ENCODE measurements at regions of chr9 and their contacts with region 1.

Region 1: GRCh38 chr9:20037699-20038098 is 248.9 kb upstream of the SLC24A2 start:
- DNase-seq: no peak
- ATAC-seq: no peak
- H3K4me3 ChIP-seq: no peak overlapping the region
- H3K4me3 Mint-ChIP-seq: no peak overlapping the region
- H3K27ac ChIP-seq: no peak overlapping the region
- H3K27ac Mint-ChIP-seq: no peak overlapping the region
- H3K4me1 ChIP-seq: peaks cover 6% of the 10 kb centered on the region
- H3K4me1 Mint-ChIP-seq: peaks cover 8% of the 10 kb centered on the region
- H3K27me3 ChIP-seq: no peaks in the 10 kb centered on the region
- H3K27me3 Mint-ChIP-seq: no peaks in the 10 kb centered on the region
- CTCF ChIP-seq: no peak

Region 2: GRCh38 chr9:20015427-20015931 is 22.2 kb before region 1 on chr9:
- CTCF ChIA-PET with region 1: no interaction called
- POLR2A ChIA-PET with region 1: no interaction called
- intact Hi-C with region 1: loop called in 1 of 2 experiments (anchors 2 kb)
- DNase-seq: peak in 3 of 14 experiments; percentile 7 to 25 (median 11)
- ATAC-seq: peak; percentile 58
- H3K4me3 ChIP-seq: no peak overlapping the region
- H3K4me3 Mint-ChIP-seq: no peak overlapping the region
- H3K27ac ChIP-seq: no peak overlapping the region
- H3K27ac Mint-ChIP-seq: peak overlapping the region; percentile 60
- H3K4me1 ChIP-seq: peaks cover 10% of the 10 kb centered on the region
- H3K4me1 Mint-ChIP-seq: peaks cover 17% of the 10 kb centered on the region
- H3K27me3 ChIP-seq: no peaks in the 10 kb centered on the region
- H3K27me3 Mint-ChIP-seq: no peaks in the 10 kb centered on the region
- CTCF ChIP-seq: no peak